Heart left ventricle (tissue), 16 donors: ENCODE measurements at regions of chr10 and their contacts with region 1.

Region 1: DNA sequence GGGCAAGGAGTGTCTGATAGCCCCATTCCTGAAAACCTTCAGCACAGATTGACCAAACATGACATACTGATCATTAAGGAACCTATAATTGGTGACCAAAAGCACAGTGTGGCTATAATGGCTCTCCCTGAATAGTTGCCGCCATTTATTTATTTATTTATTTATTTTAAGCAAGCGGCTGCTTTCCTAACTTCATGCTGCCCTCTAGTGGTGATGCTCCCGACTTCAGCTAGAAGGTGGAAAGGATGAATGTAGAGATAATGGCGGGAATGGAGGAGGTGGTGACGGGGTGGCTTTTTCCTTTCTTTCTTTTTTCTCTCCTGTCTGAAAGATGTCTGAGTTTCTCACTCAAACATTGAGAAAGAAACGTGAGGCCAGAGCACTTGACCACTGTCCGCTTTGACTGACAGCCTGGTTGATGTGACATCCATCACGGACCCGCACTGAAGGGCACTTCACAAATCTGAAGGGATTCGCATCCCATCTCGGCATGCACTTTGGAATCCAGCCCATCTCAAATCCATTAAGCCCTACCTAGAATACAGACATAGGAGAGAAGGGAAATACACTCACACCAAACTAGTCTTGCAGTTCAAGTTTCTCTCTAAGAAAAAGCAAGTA is 1090.1 kb downstream of the KCNMA1 start:
- DNase-seq: peak in 4 of 5 donors; percentile 67 to 87 (median 81)
- ATAC-seq: peak; percentile 52 to 86 (median 64)
- H3K4me3 ChIP-seq: no peak overlapping the region
- H3K27ac ChIP-seq: no peak overlapping the region
- H3K4me1 ChIP-seq: peaks cover 0 to 19% (median 1%) of the 10 kb centered on the region in 12 donors
- H3K27me3 ChIP-seq: no peaks in the 10 kb centered on the region
- CTCF ChIP-seq: peak; percentile 77 to 89 (median 85)
- POLR2A ChIP-seq: no peak

Region 2: DNA sequence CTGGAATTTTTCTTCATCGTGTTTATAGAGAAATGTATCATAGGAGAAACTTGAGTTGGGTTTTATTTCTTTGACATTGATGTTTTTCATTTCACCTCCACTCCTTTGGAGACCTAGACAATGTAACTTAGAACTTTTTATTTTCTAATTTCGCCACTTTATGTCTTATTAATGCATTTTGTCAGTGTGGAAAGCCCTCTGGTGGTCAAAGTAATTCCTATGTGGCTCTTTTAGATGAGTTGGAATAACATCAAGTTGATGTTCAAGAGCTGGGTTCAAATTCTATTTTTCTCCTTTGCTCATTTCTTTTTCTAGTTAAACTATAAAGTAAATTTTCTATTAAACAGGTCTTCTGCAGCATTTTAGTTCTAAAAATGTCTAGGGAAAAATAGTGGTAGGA is 637.4 kb before region 1 on chr10:
- intact Hi-C with region 1: loop called in 1 of 10 experiments (anchors 5 kb)
- DNase-seq: no peak
- ATAC-seq: no peak
- H3K4me3 ChIP-seq: no peak overlapping the region
- H3K27ac ChIP-seq: no peak overlapping the region
- H3K4me1 ChIP-seq: no peaks in the 10 kb centered on the region
- H3K27me3 ChIP-seq: no peaks in the 10 kb centered on the region
- CTCF ChIP-seq: peak; percentile 37 to 67 (median 54)
- POLR2A ChIP-seq: no peak

Region 3: GRCh38 chr10:76049581-76050290 is 497.7 kb before region 1 on chr10:
- intact Hi-C with region 1: loop called in 1 of 10 experiments (anchors 10 kb)
- DNase-seq: no peak
- ATAC-seq: peak in 1 of 4 donors; percentile 48
- H3K4me3 ChIP-seq: no peak overlapping the region
- H3K27ac ChIP-seq: no peak overlapping the region
- H3K4me1 ChIP-seq: peaks cover 0 to 12% (median 0%) of the 10 kb centered on the region in 12 donors
- H3K27me3 ChIP-seq: no peaks in the 10 kb centered on the region
- CTCF ChIP-seq: no peak
- POLR2A ChIP-seq: no peak

Region 4: DNA sequence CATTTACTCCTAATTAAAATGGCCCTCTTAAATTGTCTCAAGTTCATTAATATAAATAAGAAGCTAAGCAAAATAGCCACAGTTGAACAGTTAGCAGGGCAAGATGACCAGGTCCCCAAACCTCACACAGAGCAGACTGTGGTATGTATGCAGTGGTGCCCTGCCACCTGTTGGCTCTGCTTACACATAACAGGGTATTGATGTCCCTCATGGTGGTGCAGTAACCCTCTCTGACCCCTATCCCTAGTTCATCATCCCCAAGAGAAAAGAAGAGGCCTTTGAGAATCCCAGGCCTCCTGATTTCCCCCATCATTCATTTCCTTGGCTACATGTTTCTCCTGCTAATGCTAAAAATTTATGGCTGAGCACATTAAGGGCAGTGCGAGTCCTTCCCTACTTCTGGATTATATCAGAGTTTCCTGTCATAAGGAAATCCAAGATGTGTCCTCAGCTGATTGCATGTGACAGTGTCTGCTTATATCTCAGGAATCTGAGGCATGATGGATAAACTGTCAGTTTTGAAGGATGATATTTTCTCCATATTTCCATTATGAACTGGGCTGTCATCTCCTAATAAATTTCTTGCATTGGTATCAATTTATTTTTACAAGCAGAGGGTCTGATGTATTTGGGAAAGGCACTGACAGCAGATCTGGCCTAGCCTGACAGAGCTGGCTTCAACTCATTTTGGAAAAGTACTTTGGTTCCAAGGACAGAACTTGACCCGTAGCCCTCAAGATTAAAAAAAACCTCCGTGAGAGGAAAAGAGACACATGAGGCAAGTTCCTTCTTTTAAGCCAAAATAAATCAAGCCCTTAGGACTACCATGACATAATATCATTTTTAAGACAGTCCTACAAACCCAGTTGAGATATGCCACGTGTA is 235.5 kb before region 1 on chr10:
- intact Hi-C with region 1: loop called in 6 of 10 experiments (anchors 5 to 10 kb)
- DNase-seq: peak in 3 of 5 donors; percentile 19 to 44 (median 34)
- ATAC-seq: peak; percentile 70 to 86 (median 77)
- H3K4me3 ChIP-seq: no peak overlapping the region
- H3K27ac ChIP-seq: peak overlapping the region in 11 of 12 donors; percentile 26 to 76 (median 43)
- H3K4me1 ChIP-seq: peaks cover 0 to 49% (median 24%) of the 10 kb centered on the region in 12 donors
- H3K27me3 ChIP-seq: no peaks in the 10 kb centered on the region
- CTCF ChIP-seq: peak in 11 of 12 donors; percentile 20 to 54 (median 32)
- POLR2A ChIP-seq: no peak

Region 5: DNA sequence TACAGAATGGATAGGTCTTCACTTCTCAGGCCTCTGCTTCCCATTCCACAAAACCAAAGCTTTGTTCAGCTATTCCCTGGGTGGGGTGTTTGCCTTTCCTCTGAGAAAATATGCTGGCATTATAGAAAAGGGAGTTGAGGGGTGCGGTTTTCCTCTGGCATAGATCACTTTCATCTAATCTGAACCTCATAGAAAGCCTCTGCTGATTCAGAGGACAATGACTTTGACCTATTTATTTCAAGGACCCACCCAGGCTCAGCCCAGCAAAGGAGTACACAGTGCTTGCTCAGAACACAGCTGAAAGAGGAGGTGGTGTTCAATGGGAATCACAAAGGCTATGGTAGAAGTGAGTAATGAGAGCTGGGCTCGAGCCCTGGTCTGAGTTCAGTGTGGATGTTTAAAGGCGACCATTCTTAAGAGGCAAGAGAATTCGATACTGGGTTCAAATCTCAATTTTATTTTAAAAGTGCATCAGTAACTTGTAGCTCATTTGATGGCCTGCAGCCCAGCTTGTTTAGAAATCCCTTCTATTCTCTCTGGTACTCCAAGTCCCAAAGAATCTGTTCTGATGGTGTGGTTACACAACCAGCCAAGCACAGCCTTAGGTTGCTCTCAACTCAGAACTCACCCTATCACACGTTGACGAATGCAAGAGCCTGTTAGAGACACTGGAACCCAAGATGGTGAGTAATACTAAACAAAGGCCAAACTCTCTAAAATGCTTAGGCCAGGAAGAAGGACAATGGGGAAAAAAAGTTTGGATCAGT is 103.2 kb before region 1 on chr10:
- intact Hi-C with region 1: loop called in 3 of 10 experiments (anchors 5 to 10 kb)
- DNase-seq: peak in 3 of 5 donors; percentile 15 to 59 (median 42)
- ATAC-seq: peak; percentile 79 to 96 (median 90)
- H3K4me3 ChIP-seq: peak overlapping the region in 1 of 12 donors; percentile 21
- H3K27ac ChIP-seq: peak overlapping the region in 9 of 12 donors; percentile 6 to 80 (median 55)
- H3K4me1 ChIP-seq: peaks cover 0 to 25% (median 14%) of the 10 kb centered on the region in 12 donors
- H3K27me3 ChIP-seq: no peaks in the 10 kb centered on the region
- CTCF ChIP-seq: no peak
- POLR2A ChIP-seq: no peak

Region 6: GRCh38 chr10:76454506-76455140 is 92.8 kb before region 1 on chr10:
- intact Hi-C with region 1: no loop called
- DNase-seq: no peak
- ATAC-seq: peak; percentile 21 to 81 (median 62)
- H3K4me3 ChIP-seq: no peak overlapping the region
- H3K27ac ChIP-seq: peak overlapping the region in 5 of 12 donors; percentile 6 to 68 (median 19)
- H3K4me1 ChIP-seq: peaks cover 0 to 35% (median 12%) of the 10 kb centered on the region in 12 donors
- H3K27me3 ChIP-seq: no peaks in the 10 kb centered on the region
- CTCF ChIP-seq: no peak
- POLR2A ChIP-seq: no peak

Region 7: GRCh38 chr10:76481178-76481577 is 66.3 kb before region 1 on chr10:
- intact Hi-C with region 1: no loop called
- DNase-seq: no peak
- ATAC-seq: no peak
- H3K4me3 ChIP-seq: no peak overlapping the region
- H3K27ac ChIP-seq: peak overlapping the region in 1 of 12 donors; percentile 2
- H3K4me1 ChIP-seq: no peaks in the 10 kb centered on the region
- H3K27me3 ChIP-seq: no peaks in the 10 kb centered on the region
- CTCF ChIP-seq: no peak
- POLR2A ChIP-seq: no peak

Region 8: DNA sequence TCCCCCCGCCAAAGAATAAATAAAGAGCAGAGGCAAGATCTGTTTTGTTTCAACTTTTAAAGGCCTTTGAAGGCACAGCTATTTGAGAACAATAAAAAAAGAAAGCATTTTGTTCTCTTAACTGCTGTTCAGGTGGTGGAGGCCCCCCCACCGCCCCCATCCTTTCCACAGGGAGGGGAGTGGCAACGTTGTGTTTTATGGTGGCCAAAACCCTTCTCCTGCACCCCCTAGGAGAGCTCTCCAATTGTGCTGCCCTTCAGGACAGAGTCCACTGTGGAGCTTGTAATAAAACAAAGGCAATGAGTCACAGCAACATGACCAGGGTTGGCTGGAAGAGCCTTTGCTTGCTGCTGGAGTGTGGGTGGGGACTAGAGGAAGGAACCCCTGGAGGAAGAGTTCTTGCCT is 102.3 kb after region 1 on chr10:
- intact Hi-C with region 1: no loop called
- DNase-seq: peak in 2 of 5 donors; percentile 22 to 41
- ATAC-seq: peak in 3 of 4 donors; percentile 36 to 73 (median 61)
- H3K4me3 ChIP-seq: no peak overlapping the region
- H3K27ac ChIP-seq: peak overlapping the region in 1 of 12 donors; percentile 61
- H3K4me1 ChIP-seq: no peaks in the 10 kb centered on the region
- H3K27me3 ChIP-seq: no peaks in the 10 kb centered on the region
- CTCF ChIP-seq: no peak
- POLR2A ChIP-seq: no peak